CD14-positive monocyte (primary cell): ENCODE measurements at regions of chr14 and their contacts with region 1.

Region 1: GRCh38 chr14:92719890-92720323 is 28.5 kb downstream of the LGMN start:
- DNase-seq: no peak
- H3K4me3 ChIP-seq: no peak overlapping the region
- H3K4me3 Mint-ChIP-seq: no peak overlapping the region
- H3K27ac ChIP-seq: no peak overlapping the region
- H3K27ac Mint-ChIP-seq: no peak overlapping the region
- H3K4me1 ChIP-seq: peaks cover 12 to 15% of the 10 kb centered on the region in 2 donors
- H3K4me1 Mint-ChIP-seq: peaks cover 18% of the 10 kb centered on the region
- H3K27me3 ChIP-seq: no peaks in the 10 kb centered on the region
- H3K27me3 Mint-ChIP-seq: peaks cover 2 to 6% (median 3%) of the 10 kb centered on the region in 3 donors
- CTCF ChIP-seq: no peak

Region 2: DNA sequence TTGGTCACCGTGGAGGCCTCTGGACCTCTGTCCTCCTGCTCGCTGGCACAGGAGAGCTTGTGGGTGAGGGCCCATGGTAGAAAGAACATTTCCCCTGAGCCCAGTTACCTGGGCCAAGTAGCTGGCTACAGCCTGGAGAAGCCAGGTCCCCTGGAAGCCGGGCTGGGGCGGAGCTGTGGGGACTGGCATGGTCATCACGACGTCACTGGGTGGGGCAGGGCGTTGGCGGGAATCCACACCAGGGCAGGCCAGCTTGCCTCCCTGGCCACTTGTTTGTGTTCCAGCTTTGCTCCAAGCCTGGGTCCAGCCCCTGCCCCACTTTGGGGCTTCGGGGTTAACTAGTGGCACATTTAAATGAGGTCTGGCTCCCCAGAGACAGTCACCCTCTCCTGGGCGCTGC is 431.9 kb before region 1 on chr14:
- intact Hi-C with region 1: no loop called
- DNase-seq: no peak
- H3K4me3 ChIP-seq: no peak overlapping the region
- H3K4me3 Mint-ChIP-seq: no peak overlapping the region
- H3K27ac ChIP-seq: no peak overlapping the region
- H3K27ac Mint-ChIP-seq: no peak overlapping the region
- H3K4me1 ChIP-seq: no peaks in the 10 kb centered on the region
- H3K4me1 Mint-ChIP-seq: no peaks in the 10 kb centered on the region
- H3K27me3 ChIP-seq: peaks cover 11 to 25% of the 10 kb centered on the region in 2 donors
- H3K27me3 Mint-ChIP-seq: peaks cover 11 to 19% (median 17%) of the 10 kb centered on the region in 3 donors
- CTCF ChIP-seq: no peak

Region 3: GRCh38 chr14:92612988-92613658 is 106.8 kb before region 1 on chr14:
- intact Hi-C with region 1: no loop called
- DNase-seq: peak; percentile 40 to 60 (median 58)
- H3K4me3 ChIP-seq: no peak overlapping the region
- H3K4me3 Mint-ChIP-seq: no peak overlapping the region
- H3K27ac ChIP-seq: peak overlapping the region in 1 of 2 donors; percentile 4
- H3K27ac Mint-ChIP-seq: peak overlapping the region in 3 of 7 donors; percentile 36 to 83 (median 66)
- H3K4me1 ChIP-seq: peaks cover 30 to 38% of the 10 kb centered on the region in 2 donors
- H3K4me1 Mint-ChIP-seq: peaks cover 59% of the 10 kb centered on the region
- H3K27me3 ChIP-seq: no peaks in the 10 kb centered on the region
- H3K27me3 Mint-ChIP-seq: peaks cover 0 to 8% (median 0%) of the 10 kb centered on the region in 3 donors
- CTCF ChIP-seq: peak; percentile 95

Region 4: DNA sequence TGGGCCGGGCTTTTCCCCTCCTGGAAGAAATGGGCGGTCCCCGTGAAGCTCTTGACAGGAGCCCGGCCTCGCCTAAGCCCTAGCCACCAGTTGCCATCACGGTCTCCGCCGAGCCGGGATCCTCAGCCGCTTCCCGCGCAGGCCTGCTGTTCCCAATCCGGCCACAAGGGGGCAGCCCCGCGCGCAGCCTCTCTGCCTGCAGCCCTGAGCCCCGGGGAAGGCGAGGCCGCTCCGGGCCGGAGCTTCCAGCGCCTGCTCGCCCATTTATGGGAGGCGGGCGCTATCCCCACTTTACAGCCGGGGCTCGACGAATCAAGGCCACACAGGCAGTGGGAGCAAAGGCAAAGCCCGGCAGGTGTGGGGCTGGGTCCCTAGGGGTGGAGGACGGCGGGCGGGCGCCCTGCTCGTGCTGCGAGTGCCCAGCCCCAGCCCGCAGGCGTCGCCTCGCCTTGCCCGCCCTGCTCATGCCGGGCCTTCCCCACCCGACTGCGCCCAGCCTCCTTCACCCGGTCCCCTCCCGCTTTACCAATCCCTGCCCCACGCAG is 32.9 kb before region 1 on chr14:
- intact Hi-C with region 1: no loop called
- DNase-seq: peak in 1 of 3 donors; percentile 38
- H3K4me3 ChIP-seq: no peak overlapping the region
- H3K4me3 Mint-ChIP-seq: no peak overlapping the region
- H3K27ac ChIP-seq: no peak overlapping the region
- H3K27ac Mint-ChIP-seq: peak overlapping the region in 1 of 7 donors; percentile 12
- H3K4me1 ChIP-seq: no peaks in the 10 kb centered on the region
- H3K4me1 Mint-ChIP-seq: peaks cover 6% of the 10 kb centered on the region
- H3K27me3 ChIP-seq: no peaks in the 10 kb centered on the region
- H3K27me3 Mint-ChIP-seq: peaks cover 0 to 4% (median 0%) of the 10 kb centered on the region in 3 donors
- CTCF ChIP-seq: peak; percentile 92

Region 5: DNA sequence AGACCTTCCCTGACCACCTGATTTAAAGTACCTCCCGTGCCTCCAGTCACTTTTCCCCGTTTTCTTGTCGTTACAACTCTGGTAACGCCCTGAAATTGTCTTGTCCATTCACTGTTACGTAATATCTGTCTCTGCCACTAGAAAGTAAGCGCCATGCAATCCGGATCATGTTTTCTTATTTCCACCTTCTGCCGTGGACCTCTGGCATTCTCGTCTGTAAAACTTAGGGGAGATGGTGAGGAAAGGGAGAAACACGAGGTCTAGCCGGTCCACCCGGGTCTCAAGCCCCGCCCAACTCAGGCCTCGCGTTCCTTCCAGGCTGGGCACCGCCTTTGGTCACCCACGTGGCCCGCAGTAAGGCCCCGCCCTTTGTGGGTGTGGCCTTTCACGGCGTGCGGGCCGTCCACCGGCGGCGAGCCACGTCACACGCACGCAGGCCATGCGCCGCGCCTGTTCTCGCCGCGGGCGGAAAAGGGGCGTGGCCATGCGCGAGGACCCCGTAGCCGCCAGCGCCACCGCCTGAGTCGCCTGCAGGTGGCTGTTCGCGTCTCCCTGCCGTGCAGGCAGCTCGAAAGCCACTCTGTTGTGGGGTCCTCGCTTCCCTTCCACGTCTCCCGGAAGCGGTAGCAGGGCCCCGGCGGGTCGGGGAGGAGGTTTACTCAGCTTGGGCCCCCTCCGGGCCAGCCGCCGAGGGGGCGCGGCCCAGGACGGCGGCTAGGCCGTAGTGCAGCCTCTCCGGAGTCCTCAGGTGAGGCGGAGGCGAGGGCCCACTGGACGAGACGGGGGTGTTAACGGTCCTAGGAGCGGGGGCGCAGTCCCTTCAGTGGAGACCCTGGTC is 74.0 kb after region 1 on chr14 and contains the start of gene GOLGA5:
- intact Hi-C with region 1: loop called in 1 of 2 experiments (anchors 2 kb)
- DNase-seq: peak; percentile 97 to 99 (median 99)
- H3K4me3 ChIP-seq: peak within 1 kb of the TSS; percentile 91 to 99 (median 94)
- H3K4me3 Mint-ChIP-seq: peak within 1 kb of the TSS; percentile 94 to 98
- H3K27ac ChIP-seq: peak within 1 kb of the TSS; percentile 90 to 97
- H3K27ac Mint-ChIP-seq: peak within 1 kb of the TSS; percentile 90 to 98 (median 97)
- H3K4me1 ChIP-seq: peaks cover 21 to 27% of the 10 kb centered on the region in 2 donors
- H3K4me1 Mint-ChIP-seq: peaks cover 27% of the 10 kb centered on the region
- H3K27me3 ChIP-seq: no peaks in the 10 kb centered on the region
- H3K27me3 Mint-ChIP-seq: no peaks in the 10 kb centered on the region
- CTCF ChIP-seq: no peak
- polyA plus RNA-seq, gene GOLGA5: 12.4 to 19.0 (median 16.3) TPM

Region 6: GRCh38 chr14:92844204-92844603 is 124.3 kb after region 1 on chr14:
- intact Hi-C with region 1: no loop called
- DNase-seq: peak in 1 of 3 donors; percentile 18
- H3K4me3 ChIP-seq: no peak overlapping the region
- H3K4me3 Mint-ChIP-seq: no peak overlapping the region
- H3K27ac ChIP-seq: no peak overlapping the region
- H3K27ac Mint-ChIP-seq: peak overlapping the region in 5 of 7 donors; percentile 9 to 78 (median 21)
- H3K4me1 ChIP-seq: peaks cover 21 to 27% of the 10 kb centered on the region in 2 donors
- H3K4me1 Mint-ChIP-seq: peaks cover 26% of the 10 kb centered on the region
- H3K27me3 ChIP-seq: no peaks in the 10 kb centered on the region
- H3K27me3 Mint-ChIP-seq: peaks cover 0 to 1% (median 0%) of the 10 kb centered on the region in 3 donors
- CTCF ChIP-seq: no peak